ENCODE measurements at regions of chr11 and their contacts with region 1.

Region 1: DNA sequence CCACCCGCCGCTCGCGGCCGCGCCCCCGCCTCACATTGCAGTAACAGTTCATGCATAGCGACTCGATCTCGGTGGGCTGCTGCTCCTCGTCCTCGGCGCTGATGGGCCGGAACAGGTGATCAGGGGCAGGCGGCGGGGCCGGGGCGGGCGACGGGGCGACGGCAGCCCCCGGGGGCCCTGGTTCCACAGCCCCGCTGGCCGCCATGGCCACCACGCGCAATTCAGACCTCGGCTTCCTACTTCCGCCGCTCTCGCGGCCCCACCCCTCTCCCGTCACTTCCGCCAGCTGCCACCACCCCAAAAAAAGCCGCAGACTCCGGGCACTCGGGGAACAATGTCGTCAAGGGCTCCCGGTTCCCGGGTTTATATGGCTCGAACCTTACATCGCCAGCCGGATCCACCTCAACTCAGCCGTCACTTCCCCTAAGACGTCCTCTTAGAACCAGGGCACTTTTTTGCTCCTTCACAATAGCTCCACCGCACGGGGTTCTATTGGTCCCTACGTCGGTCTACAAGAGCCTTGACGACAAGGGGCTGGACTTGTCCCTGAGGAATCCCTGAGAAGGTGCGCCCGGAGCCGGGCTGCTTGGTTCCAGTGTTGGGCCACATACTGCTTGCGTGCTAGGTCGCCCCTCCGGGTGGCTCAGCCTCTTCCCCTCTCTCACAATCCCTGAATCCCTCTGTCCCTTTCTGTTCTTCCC is at the start of gene ZPR1:
- DNase-seq: peak; percentile 73 to 91 (median 82)
- ATAC-seq: peak; percentile 86 to 91 (median 90)
- H3K4me3 ChIP-seq: peak within 1 kb of the TSS; percentile 91 to 98 (median 94)
- H3K27ac ChIP-seq: peak within 1 kb of the TSS; percentile 62 to 83 (median 71)
- H3K4me1 ChIP-seq: peaks cover 14 to 24% (median 19%) of the 10 kb centered on the region in 3 donors
- H3K27me3 ChIP-seq: no peaks in the 10 kb centered on the region
- CTCF ChIP-seq: no peak
- total RNA-seq, gene ZPR1: 15.9 to 35.5 (median 23.4) TPM

Region 2: DNA sequence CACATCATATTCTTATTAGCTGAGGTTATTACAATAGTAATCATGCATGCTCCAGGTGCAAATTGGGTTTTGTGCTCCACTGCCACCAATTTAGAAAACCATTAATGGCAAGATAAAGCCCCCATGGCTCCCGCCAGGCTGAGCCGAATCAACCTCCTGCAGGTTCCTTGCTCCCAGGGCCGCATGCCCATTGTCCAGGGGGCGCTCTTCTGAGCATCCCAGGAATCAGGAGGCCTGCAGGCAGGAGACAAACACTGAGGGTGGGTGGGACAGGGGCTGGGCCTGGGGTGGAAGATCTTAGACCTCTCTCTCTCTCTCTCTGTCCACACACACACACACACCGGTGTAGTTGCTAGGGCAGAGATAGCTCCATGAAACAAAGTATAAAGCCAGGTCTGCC is 72.6 kb before region 1 on chr11:
- intact Hi-C with region 1: no loop called
- DNase-seq: peak in 1 of 6 donors; percentile 16
- ATAC-seq: no peak
- H3K4me3 ChIP-seq: no peak overlapping the region
- H3K27ac ChIP-seq: no peak overlapping the region
- H3K4me1 ChIP-seq: no peaks in the 10 kb centered on the region
- H3K27me3 ChIP-seq: no peaks in the 10 kb centered on the region
- CTCF ChIP-seq: no peak

Region 3: DNA sequence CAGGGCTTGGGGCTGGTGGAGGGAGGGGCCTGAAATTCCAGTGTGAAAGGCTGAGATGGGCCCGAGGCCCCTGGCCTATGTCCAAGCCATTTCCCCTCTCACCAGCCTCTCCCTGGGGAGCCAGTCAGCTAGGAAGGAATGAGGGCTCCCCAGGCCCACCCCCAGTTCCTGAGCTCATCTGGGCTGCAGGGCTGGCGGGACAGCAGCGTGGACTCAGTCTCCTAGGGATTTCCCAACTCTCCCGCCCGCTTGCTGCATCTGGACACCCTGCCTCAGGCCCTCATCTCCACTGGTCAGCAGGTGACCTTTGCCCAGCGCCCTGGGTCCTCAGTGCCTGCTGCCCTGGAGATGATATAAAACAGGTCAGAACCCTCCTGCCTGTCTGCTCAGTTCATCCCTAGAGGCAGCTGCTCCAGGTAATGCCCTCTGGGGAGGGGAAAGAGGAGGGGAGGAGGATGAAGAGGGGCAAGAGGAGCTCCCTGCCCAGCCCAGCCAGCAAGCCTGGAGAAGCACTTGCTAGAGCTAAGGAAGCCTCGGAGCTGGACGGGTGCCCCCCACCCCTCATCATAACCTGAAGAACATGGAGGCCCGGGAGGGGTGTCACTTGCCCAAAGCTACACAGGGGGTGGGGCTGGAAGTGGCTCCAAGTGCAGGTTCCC is 41.7 kb after region 1 on chr11 and contains the start of gene APOC3:
- intact Hi-C with region 1: loop called in 1 of 3 experiments (anchors 5 kb)
- DNase-seq: peak in 1 of 6 donors; percentile 56
- ATAC-seq: no peak
- H3K4me3 ChIP-seq: no peak within 1 kb of the TSS
- H3K27ac ChIP-seq: no peak within 1 kb of the TSS
- H3K4me1 ChIP-seq: peaks cover 0 to 6% (median 0%) of the 10 kb centered on the region in 3 donors
- H3K27me3 ChIP-seq: no peaks in the 10 kb centered on the region
- CTCF ChIP-seq: no peak
- total RNA-seq, gene APOC3: 3.7 TPM in 1 of 6 donors, not detected in the others

Region 4: DNA sequence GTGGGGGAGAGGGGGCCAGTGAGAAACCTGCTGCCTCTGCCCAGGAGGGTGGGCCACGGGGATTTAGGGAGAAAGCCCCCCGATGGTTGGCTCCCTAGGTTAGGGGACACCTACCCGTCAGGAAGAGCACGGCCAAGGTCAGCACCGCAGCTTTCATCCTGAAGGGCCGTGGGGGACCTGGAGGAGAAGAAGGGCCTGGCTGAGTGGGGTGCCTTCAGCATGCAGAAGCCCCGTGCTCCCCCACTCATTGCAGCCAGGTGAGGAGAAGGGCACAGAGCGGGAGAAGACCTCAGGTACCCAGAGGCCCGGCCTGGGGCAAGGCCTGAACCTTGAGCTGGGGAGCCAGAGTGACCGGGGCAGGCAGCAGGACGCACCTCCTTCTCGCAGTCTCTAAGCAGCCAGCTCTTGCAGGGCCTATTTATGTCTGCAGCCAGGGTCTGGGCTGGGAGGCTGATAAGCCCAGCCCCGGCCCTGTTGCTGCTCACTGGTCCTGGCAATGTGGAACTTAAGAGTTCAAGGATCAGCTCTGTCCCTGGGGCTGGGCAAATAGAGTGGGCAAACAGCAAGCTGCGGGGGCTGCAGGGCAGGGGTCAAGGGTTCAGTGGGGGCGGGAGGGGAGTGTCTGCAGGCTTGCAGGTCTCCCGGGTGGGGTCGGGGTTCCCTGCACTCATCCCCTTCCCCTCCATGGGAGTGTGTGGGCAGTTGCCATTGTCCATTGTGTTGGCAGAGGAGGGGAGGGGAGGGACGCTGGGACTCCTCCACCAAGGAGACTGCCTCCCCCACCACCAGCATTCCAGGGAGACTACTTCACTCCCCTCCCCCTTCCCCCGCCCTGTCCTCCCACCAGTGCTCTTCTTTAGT is 49.5 kb after region 1 on chr11 and contains the start of gene APOA1:
- intact Hi-C with region 1: loop called in 2 of 3 experiments (anchors 2 to 5 kb)
- DNase-seq: peak in 1 of 6 donors; percentile 69
- ATAC-seq: no peak
- H3K4me3 ChIP-seq: no peak within 1 kb of the TSS
- H3K27ac ChIP-seq: no peak within 1 kb of the TSS
- H3K4me1 ChIP-seq: peaks cover 0 to 10% (median 0%) of the 10 kb centered on the region in 3 donors
- H3K27me3 ChIP-seq: no peaks in the 10 kb centered on the region
- CTCF ChIP-seq: no peak
- total RNA-seq, gene APOA1: 0.16 to 5.2 (median 0.22) TPM in 3 of 6 donors, not detected in the others

Region 5: GRCh38 chr11:117107701-117108590 is 320.0 kb after region 1 on chr11:
- intact Hi-C with region 1: loop called in 2 of 3 experiments (anchors 10 kb)
- DNase-seq: no peak
- ATAC-seq: no peak
- H3K4me3 ChIP-seq: no peak overlapping the region
- H3K27ac ChIP-seq: no peak overlapping the region
- H3K4me1 ChIP-seq: no peaks in the 10 kb centered on the region
- H3K27me3 ChIP-seq: no peaks in the 10 kb centered on the region
- CTCF ChIP-seq: no peak